ENCODE measurements at regions of chr9 and their contacts with region 1.

Region 1: DNA sequence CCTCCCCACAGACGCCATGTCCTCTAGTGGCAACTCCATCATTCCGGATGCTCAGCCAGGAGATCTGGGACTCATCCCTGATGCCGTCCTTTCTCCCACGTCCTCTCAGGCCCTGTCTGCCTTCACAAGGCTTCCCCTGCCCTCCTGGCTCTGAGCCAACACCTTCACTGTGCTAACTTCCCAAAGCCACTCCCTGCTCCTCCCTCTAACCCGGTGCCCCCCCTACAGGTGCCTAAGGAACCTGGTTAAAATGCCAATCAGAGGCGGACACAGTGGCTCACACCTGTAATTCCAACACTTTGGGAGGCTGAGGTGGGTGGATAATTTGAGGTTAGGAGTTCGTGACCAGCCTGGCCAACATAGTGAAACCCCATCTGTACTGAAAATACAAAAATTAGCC is 67.6 kb downstream of the LMX1B start:
- DNase-seq: peak; percentile 51
- ATAC-seq: peak; percentile 11
- H3K4me3 Mint-ChIP-seq: no peak overlapping the region
- H3K27ac Mint-ChIP-seq: no peak overlapping the region
- H3K4me1 Mint-ChIP-seq: peaks cover 46% of the 10 kb centered on the region
- H3K27me3 Mint-ChIP-seq: peaks cover 92% of the 10 kb centered on the region
- CTCF ChIP-seq: no peak

Region 2: DNA sequence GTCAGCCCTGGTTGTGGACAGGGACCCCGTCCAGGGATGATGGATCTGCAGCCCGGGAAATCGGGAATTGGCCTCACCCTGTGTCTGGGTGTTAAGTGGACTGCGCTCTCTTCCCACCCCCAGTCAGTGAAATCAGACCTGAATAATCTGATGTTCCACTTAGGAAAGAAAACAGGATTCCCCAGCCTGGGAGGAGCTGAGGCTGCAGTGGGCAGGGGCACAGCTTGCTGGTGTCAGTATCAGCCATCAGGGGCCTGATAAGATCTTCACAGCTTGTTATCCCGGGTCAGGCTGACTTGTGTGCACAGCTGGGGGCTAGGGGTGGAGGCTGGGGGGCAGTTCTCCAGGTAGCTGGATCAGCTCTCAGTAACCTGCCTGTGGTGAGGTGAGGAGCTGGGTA is 38.5 kb before region 1 on chr9:
- CTCF ChIA-PET with region 1: interaction called, 10 read pairs
- POLR2A ChIA-PET with region 1: interaction called, 4 read pairs
- DNase-seq: no peak
- ATAC-seq: no peak
- H3K4me3 Mint-ChIP-seq: no peak overlapping the region
- H3K27ac Mint-ChIP-seq: no peak overlapping the region
- H3K4me1 Mint-ChIP-seq: peaks cover 33% of the 10 kb centered on the region
- H3K27me3 Mint-ChIP-seq: peaks cover 60% of the 10 kb centered on the region
- CTCF ChIP-seq: no peak

Region 3: DNA sequence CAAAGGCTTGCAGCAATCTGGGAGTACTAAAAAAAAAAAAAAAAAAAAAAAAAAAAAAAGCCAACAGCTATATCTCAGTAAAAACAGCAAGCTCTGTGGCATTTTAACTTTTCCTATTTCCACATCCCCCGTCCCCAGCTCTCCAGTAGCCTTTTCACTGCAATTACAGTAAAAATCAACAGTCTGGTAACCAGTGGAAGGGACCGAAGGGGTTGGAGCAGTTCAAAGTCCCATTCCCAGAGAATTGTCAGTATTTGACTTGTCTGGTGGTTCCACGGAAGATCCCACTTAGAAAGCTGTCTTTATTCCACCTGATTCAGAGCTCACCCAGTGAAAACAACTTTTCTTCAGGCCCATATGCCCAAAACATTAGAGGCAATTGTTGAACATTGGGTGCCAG is 51.6 kb after region 1 on chr9:
- CTCF ChIA-PET with region 1: no interaction called
- POLR2A ChIA-PET with region 1: no interaction called
- DNase-seq: no peak
- ATAC-seq: no peak
- H3K4me3 Mint-ChIP-seq: no peak overlapping the region
- H3K27ac Mint-ChIP-seq: no peak overlapping the region
- H3K4me1 Mint-ChIP-seq: no peaks in the 10 kb centered on the region
- H3K27me3 Mint-ChIP-seq: peaks cover 26% of the 10 kb centered on the region
- CTCF ChIP-seq: no peak

Region 4: DNA sequence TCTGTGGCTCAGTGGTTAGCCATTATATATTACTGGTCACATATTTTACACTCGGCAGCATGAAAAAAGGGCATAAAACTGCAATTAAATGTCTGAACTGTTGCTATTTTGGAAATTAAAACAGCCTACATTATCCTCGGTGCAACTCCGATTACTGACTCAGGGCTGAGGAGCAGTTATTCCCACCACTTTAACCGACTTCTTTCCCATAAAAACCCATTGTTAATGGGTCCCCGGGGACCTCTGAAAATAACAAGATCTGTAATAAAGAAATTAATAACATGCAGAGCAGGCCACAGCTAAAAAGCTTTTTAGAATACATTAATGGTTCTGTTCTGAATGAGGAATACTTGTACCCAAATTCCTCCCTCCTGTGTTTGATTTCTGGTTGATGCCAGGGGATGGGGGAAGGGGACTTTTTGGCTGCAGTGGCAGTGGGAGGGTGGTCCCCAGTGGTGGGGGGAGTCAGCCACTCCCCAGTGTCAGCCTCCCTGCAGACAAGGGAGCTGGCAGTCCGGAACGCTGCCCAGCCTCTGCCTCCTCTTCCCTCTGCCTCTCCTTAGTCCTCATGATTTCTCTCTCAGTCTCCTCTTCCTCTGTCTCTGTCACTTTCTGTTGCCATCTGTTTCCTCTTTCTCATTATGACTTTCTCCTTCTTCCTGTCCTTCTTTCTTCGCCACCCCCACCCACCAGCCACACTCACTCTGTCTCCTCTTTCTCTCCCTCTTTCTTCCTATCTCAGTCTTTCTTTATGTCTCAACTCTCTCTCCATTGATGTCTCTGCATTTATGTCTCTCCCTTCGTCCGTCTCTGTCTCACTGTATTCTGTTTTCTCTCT is 64.4 kb after region 1 on chr9:
- CTCF ChIA-PET with region 1: no interaction called
- POLR2A ChIA-PET with region 1: no interaction called
- DNase-seq: no peak
- ATAC-seq: no peak
- H3K4me3 Mint-ChIP-seq: no peak overlapping the region
- H3K27ac Mint-ChIP-seq: no peak overlapping the region
- H3K4me1 Mint-ChIP-seq: peaks cover 7% of the 10 kb centered on the region; the same call in 1 of the 2 replicates
- H3K27me3 Mint-ChIP-seq: peaks cover 17% of the 10 kb centered on the region
- CTCF ChIP-seq: no peak

Measured in WTC11 (cell line).